Uterus (tissue), 4 donors: ENCODE measurements at regions of chr2 and their contacts with region 1.

Region 1: GRCh38 chr2:1781271-1782080 is 37.2 kb upstream of the PXDN start:
- DNase-seq: no peak
- H3K4me3 ChIP-seq: no peak overlapping the region
- H3K27ac ChIP-seq: no peak overlapping the region
- H3K4me1 ChIP-seq: no peaks in the 10 kb centered on the region
- H3K27me3 ChIP-seq: no peaks in the 10 kb centered on the region
- CTCF ChIP-seq: no peak
- POLR2A ChIP-seq: no peak

Region 2: GRCh38 chr2:824954-825353 is 956.5 kb before region 1 on chr2:
- intact Hi-C with region 1: loop called (anchors 5 kb)
- DNase-seq: no peak
- H3K4me3 ChIP-seq: no peak overlapping the region
- H3K27ac ChIP-seq: no peak overlapping the region
- H3K4me1 ChIP-seq: no peaks in the 10 kb centered on the region
- H3K27me3 ChIP-seq: no peaks in the 10 kb centered on the region
- CTCF ChIP-seq: no peak
- POLR2A ChIP-seq: no peak